Calu3 (cell line): ENCODE measurements at regions of chr4 and their contacts with region 1.

Region 1: GRCh38 chr4:174005422-174005821 is 278.0 kb downstream of the FBXO8 start:
- DNase-seq: peak; percentile 3
- H3K4me3 Mint-ChIP-seq: no peak overlapping the region
- H3K27ac Mint-ChIP-seq: no peak overlapping the region
- H3K4me1 Mint-ChIP-seq: peaks cover 6% of the 10 kb centered on the region
- H3K27me3 Mint-ChIP-seq: no peaks in the 10 kb centered on the region
- CTCF ChIP-seq: no peak

Region 2: GRCh38 chr4:173413036-173413435 is 592.4 kb before region 1 on chr4:
- CTCF ChIA-PET with region 1: no interaction called
- intact Hi-C with region 1: no loop called
- DNase-seq: no peak
- H3K4me3 Mint-ChIP-seq: no peak overlapping the region
- H3K27ac Mint-ChIP-seq: no peak overlapping the region
- H3K4me1 Mint-ChIP-seq: no peaks in the 10 kb centered on the region
- H3K27me3 Mint-ChIP-seq: no peaks in the 10 kb centered on the region
- CTCF ChIP-seq: no peak

Region 3: DNA sequence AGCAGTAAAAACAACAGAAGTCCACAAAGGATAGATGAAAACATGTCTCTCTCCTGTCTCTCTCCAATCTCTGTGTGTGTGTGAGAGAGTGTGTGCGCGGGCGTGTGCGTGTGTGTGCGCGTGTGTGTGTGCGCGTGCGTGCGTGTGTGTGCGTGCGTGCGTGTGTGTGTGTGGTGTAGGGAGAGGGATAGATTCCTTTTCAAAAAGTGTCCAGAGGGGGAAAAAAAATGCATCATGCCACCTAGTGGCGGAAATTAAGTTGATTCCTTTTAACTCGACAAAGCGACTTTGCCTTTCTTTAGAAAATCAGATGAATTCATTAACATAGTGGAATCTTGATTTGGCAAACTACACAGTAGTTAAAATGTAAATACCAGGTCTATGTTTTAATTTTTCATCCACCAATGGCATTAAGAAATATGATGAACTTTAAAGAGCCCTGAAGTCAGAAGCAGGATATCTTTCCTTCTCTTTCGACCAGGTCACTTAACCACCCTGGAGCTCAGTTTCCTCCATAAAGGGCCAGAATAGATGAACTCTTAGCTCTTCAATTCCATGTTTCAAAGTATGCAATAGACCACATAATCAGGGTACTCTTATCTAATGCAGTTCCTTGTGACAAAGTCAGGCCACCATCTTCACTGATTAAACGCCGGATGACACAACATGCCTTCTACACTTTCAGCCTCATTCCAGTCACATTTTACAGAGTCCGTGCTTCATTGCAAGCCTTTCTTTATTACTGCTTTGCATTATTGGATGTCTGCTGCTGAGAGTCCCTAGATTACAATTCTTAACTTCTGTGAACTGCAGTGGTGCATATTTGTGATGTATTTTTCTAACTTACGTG is 115.2 kb after region 1 on chr4:
- CTCF ChIA-PET with region 1: no interaction called
- intact Hi-C with region 1: loop called (anchors 2 kb)
- DNase-seq: peak; percentile 50
- H3K4me3 Mint-ChIP-seq: peak overlapping the region; percentile 76
- H3K27ac Mint-ChIP-seq: no peak overlapping the region
- H3K4me1 Mint-ChIP-seq: no peaks in the 10 kb centered on the region
- H3K27me3 Mint-ChIP-seq: no peaks in the 10 kb centered on the region
- CTCF ChIP-seq: no peak